PC-9 (cell line): ENCODE measurements at regions of chr17 and their contacts with region 1.

Region 1: GRCh38 chr17:76365256-76365903 is 11.7 kb upstream of the PRPSAP1 start:
- DNase-seq: no peak
- H3K4me3 ChIP-seq: no peak overlapping the region
- H3K27ac ChIP-seq: no peak overlapping the region
- H3K4me1 ChIP-seq: no peaks in the 10 kb centered on the region
- H3K27me3 ChIP-seq: no peaks in the 10 kb centered on the region
- CTCF ChIP-seq: peak; percentile 65

Region 2: DNA sequence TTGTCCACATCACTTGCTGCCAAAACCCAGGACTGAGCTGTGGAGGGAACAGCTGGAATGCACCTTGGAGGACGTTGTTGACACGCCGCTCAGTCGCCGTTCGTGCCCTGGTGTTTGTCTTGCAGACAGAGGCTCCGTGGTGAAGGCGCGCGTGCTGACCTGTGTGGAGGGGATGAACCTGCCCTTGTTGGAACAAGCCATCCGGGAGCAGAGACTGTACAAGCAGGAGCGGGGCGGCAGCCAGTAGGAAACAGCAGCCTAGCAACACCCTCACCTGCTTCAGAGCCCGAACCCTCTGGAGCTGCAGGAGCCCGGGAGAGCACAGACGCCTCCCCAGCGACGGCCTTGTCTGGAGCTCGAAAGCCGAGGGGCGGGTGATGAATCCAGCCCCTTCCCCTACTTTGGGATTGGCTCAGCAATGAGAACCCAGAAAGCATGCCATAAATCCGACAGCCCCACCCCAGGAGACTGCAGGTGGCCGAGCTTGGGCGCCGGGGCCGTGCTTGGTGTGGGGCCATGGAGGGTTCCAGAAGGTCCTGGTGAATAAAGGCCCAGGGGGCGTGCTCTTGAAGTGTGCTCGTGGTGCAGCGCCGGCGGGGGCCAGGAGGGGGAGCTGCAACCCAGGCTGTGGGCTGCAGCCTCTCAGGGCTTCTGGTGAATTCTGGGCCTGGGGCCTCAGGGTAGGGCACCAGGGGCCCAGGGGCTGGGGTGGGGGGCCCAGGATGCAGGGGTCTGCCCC is 365.2 kb before region 1 on chr17:
- CTCF ChIA-PET with region 1: interaction called, 18 read pairs
- POLR2A ChIA-PET with region 1: no interaction called
- intact Hi-C with region 1: no loop called
- DNase-seq: peak in 1 of 2 experiments; percentile 52
- H3K4me3 ChIP-seq: no peak overlapping the region
- H3K27ac ChIP-seq: no peak overlapping the region
- H3K4me1 ChIP-seq: peaks cover 51% of the 10 kb centered on the region
- H3K27me3 ChIP-seq: no peaks in the 10 kb centered on the region
- CTCF ChIP-seq: peak; percentile 88

Region 3: GRCh38 chr17:76353599-76354316 is 11.6 kb before region 1 on chr17 and contains the start of gene PRPSAP1:
- CTCF ChIA-PET with region 1: interaction called, 11 read pairs
- POLR2A ChIA-PET with region 1: interaction called, 7 read pairs
- intact Hi-C with region 1: no loop called
- DNase-seq: peak; percentile 79 to 88
- H3K4me3 ChIP-seq: peak within 1 kb of the TSS; percentile 73
- H3K27ac ChIP-seq: peak within 1 kb of the TSS; percentile 75
- H3K4me1 ChIP-seq: no peaks in the 10 kb centered on the region
- H3K27me3 ChIP-seq: no peaks in the 10 kb centered on the region
- CTCF ChIP-seq: peak; percentile 49; the same call in 1 of the 2 replicates
- total RNA-seq, gene PRPSAP1: 63.3 and 73.0 TPM in 2 replicates

Region 4: DNA sequence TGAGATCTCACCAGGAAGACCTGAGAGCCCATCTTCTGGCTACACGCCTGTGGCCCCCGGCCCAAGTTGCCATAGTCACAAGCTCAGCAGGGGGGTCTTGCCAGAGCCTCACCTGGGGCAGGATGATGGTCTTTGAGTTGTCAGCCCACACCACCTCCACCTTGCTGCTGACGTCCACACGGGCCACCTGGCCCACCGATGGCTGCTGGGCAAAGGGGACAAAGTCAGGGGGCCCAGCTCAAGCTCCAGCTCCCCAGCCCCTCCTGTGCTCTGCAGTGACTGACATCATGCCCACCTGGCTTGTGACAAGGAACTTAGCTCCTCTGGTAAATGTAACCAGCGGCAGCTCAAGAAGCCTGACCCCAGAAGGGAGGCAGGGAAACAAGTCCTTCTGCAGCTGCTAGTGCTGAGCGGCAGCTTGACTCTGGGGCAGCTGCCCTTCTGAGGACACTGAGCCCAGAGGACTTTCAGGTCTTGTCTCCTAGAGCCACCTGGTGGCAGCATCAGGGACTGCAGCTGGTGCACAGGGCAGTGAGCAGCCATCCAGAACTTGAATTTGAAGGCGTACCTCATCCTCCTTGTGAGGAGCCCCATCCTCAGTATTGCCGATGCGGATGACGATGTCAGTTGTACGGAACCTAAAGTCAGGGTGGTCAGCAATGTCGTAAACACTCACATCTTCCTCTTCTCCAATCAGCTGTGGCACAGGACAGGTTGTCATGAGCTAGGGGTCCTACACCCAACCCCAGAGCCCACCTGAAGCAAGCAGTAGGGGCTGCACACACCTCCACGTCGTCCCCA is 32.5 kb after region 1 on chr17:
- CTCF ChIA-PET with region 1: interaction called, 10 read pairs
- POLR2A ChIA-PET with region 1: no interaction called
- intact Hi-C with region 1: loop called (anchors 1 kb)
- DNase-seq: peak; percentile 59 to 84
- H3K4me3 ChIP-seq: no peak overlapping the region
- H3K27ac ChIP-seq: no peak overlapping the region
- H3K4me1 ChIP-seq: no peaks in the 10 kb centered on the region
- H3K27me3 ChIP-seq: no peaks in the 10 kb centered on the region
- CTCF ChIP-seq: peak; percentile 89

Region 5: GRCh38 chr17:76458580-76459490 is 93.5 kb after region 1 on chr17:
- CTCF ChIA-PET with region 1: interaction called, 12 read pairs
- POLR2A ChIA-PET with region 1: no interaction called
- intact Hi-C with region 1: no loop called
- DNase-seq: peak in 1 of 2 experiments; percentile 60
- H3K4me3 ChIP-seq: no peak overlapping the region
- H3K27ac ChIP-seq: no peak overlapping the region
- H3K4me1 ChIP-seq: no peaks in the 10 kb centered on the region
- H3K27me3 ChIP-seq: no peaks in the 10 kb centered on the region
- CTCF ChIP-seq: peak; percentile 60